MCF 10A (cell line): ENCODE measurements at regions of chr21 and their contacts with region 1.

Region 1: DNA sequence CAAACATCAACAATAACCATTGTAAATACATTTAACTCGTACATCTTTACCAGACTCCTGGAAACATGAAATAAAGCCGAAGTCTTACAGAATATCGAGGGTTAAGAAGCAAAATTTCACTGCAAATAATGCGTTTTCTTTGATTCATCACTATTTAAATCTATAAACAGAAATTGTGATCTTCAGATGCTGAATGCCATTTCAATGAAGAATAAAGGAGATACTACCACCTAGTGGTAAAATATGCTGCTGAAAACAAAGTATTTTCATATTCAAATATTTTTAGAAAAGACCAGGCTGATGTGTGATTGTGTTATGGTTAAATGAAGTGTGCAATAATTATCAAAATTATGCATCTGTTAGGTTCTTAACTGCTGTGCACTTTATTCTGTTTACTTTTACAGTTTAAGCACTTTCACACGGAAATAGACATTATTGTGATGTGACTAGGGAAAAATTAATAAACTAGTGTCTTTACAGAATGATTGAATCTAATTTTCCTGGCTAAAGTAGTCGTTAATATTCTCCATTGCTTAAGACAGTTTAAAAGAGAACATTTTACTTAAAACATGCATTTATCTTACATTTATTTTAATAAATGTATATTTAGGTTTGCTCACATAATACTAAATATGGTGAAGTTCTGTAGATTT is 1093.1 kb downstream of the MRPL39 start:
- DNase-seq: peak; percentile 33
- H3K4me3 Mint-ChIP-seq: no peak overlapping the region
- H3K27ac Mint-ChIP-seq: no peak overlapping the region
- H3K4me1 Mint-ChIP-seq: no peaks in the 10 kb centered on the region
- H3K27me3 Mint-ChIP-seq: no peaks in the 10 kb centered on the region
- CTCF ChIP-seq: peak; percentile 46

Region 2: DNA sequence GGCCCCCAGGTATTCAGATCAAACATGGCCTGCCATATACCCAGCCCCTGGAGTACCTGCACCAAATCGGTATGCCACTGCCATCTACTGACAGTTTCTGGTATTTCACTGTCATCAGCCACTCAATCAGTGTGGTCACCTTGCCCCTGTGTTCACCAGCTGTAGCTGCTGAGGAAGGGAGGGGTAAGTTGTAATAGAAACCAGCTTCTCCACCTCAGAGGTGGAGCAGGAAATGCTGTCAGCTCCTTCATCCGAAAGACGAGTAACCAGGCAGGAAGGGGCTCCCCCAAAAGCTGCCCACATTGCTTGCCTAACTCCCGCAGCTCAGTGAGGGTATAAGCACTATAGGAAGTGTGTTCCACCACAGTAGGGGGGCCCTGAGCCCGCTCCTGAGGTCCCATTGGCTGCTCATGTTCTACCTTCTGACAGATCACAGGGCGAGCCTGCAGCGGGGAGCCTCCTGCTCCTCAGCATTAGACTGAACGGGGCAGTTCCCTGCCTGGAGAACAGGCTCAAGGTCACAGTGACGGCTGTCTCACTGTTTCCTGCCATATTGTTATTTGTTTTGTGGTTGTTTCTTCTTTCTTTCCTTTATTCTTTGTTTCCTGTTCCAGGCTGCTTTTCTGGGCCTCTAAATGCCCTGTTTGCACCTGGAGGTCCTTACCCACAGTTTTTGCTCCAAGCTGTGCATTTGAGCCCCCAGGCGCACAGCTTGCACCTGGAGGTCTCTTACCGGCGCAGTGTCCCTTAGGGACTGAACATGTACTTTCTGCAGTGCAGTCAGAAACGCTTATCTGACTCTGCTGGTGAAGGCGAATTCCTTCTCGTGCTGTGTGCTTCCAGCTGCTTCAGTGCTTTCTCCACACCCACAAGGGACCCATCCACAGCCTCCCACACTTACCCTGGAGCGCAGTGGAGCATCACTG is 545.2 kb before region 1 on chr21:
- CTCF ChIA-PET with region 1: interaction called, 3 read pairs
- POLR2A ChIA-PET with region 1: no interaction called
- intact Hi-C with region 1: loop called (anchors 2 kb)
- DNase-seq: peak; percentile 68
- H3K4me3 Mint-ChIP-seq: no peak overlapping the region
- H3K27ac Mint-ChIP-seq: peak overlapping the region; percentile 40
- H3K4me1 Mint-ChIP-seq: peaks cover 10% of the 10 kb centered on the region
- H3K27me3 Mint-ChIP-seq: no peaks in the 10 kb centered on the region
- CTCF ChIP-seq: peak; percentile 73

Region 3: GRCh38 chr21:24118738-24119459 is 395.3 kb before region 1 on chr21:
- CTCF ChIA-PET with region 1: interaction called, 3 read pairs
- POLR2A ChIA-PET with region 1: no interaction called
- intact Hi-C with region 1: loop called (anchors 10 kb)
- DNase-seq: no peak
- H3K4me3 Mint-ChIP-seq: no peak overlapping the region
- H3K27ac Mint-ChIP-seq: no peak overlapping the region
- H3K4me1 Mint-ChIP-seq: no peaks in the 10 kb centered on the region
- H3K27me3 Mint-ChIP-seq: no peaks in the 10 kb centered on the region
- CTCF ChIP-seq: no peak

Region 4: GRCh38 chr21:25039461-25040380 is 525.5 kb after region 1 on chr21:
- CTCF ChIA-PET with region 1: interaction called, 4 read pairs
- POLR2A ChIA-PET with region 1: no interaction called
- intact Hi-C with region 1: loop called (anchors 1 kb)
- DNase-seq: peak; percentile 64
- H3K4me3 Mint-ChIP-seq: peak overlapping the region; percentile 71
- H3K27ac Mint-ChIP-seq: peak overlapping the region; percentile 52
- H3K4me1 Mint-ChIP-seq: peaks cover 8% of the 10 kb centered on the region
- H3K27me3 Mint-ChIP-seq: no peaks in the 10 kb centered on the region
- CTCF ChIP-seq: peak; percentile 58